ENCODE measurements at regions of chrX and their contacts with region 1.

Region 1: DNA sequence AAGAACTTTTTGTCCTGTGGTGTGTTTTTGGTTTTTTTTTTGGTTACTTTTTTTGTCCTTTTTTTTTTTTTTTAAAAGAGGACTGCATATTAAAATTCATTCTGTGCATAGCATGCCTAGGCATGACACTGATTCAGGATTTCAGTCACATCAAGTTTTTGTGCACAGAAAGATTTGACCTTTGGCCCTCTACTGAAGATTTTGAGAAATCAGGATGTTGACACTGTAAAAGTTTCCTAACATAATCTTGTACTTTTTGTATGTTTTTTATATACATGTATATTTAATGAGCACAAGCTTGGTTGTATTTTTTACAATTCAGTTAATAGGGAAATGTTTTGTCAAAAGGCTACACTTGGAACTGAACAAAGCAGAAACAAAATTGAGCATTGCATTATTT is 100.0 kb upstream of the DDX3X start:
- DNase-seq: no peak
- ATAC-seq: no peak

Region 2: DNA sequence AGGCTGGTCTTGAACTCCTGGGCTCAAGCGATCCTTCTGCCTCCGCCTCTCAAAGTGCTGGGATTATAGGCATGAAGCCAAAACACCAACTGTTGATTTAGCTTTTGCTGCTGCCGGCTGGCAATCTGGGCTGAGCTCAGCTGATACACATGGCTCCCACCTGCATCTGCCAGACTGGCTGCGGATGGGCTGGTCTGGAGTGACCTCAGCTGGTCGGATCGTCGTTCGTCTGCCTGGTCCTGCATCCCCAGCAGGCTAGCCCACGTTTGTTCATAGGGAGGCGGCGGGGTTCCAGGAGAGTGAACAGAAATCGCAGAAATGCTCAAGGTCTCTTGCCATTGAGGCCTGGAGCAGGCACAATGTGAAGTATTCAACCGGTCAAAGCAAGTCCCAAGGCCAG is 25.5 kb after region 1 on chrX:
- intact Hi-C with region 1: loop called (anchors 2 kb)
- DNase-seq: no peak
- ATAC-seq: no peak

Measured in sciatic nerve (tissue), 2 donors.